MCF 10A (cell line): ENCODE measurements at regions of chr11 and their contacts with region 1.

Region 1: GRCh38 chr11:89405629-89406028 is 85.5 kb downstream of the NOX4 start:
- DNase-seq: peak; percentile 23
- H3K4me3 Mint-ChIP-seq: no peak overlapping the region
- H3K27ac Mint-ChIP-seq: no peak overlapping the region
- H3K4me1 Mint-ChIP-seq: no peaks in the 10 kb centered on the region
- H3K27me3 Mint-ChIP-seq: peaks cover under 1% of the 10 kb centered on the region
- CTCF ChIP-seq: peak; percentile 21

Region 2: GRCh38 chr11:89235976-89236375 is 169.7 kb before region 1 on chr11:
- CTCF ChIA-PET with region 1: no interaction called
- POLR2A ChIA-PET with region 1: no interaction called
- intact Hi-C with region 1: no loop called
- DNase-seq: no peak
- H3K4me3 Mint-ChIP-seq: no peak overlapping the region
- H3K27ac Mint-ChIP-seq: no peak overlapping the region
- H3K4me1 Mint-ChIP-seq: peaks cover 5% of the 10 kb centered on the region
- H3K27me3 Mint-ChIP-seq: peaks cover 90% of the 10 kb centered on the region
- CTCF ChIP-seq: no peak

Region 3: DNA sequence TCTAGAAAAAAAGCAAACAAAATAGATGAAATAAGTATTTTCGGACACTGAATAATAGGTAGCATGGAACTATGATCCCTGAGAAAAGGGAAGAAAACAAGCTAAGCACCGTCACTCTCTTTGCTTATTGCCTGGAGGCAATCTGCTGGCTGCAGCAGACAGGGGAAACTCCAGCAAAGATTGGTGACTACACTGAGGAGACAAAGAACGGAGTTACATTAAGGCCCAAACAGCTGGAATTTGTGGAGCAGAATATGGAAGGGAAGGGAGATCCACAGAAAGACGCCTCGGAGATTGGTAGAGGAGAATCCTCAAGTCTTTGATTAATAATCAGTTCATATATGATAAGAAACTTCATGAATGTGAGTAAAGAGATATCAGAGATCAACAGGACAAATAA is 77.7 kb before region 1 on chr11:
- CTCF ChIA-PET with region 1: interaction called, 21 read pairs
- POLR2A ChIA-PET with region 1: interaction called, 3 read pairs
- intact Hi-C with region 1: loop called (anchors 1 kb)
- DNase-seq: no peak
- H3K4me3 Mint-ChIP-seq: no peak overlapping the region
- H3K27ac Mint-ChIP-seq: peak overlapping the region; percentile 33
- H3K4me1 Mint-ChIP-seq: peaks cover 6% of the 10 kb centered on the region
- H3K27me3 Mint-ChIP-seq: no peaks in the 10 kb centered on the region
- CTCF ChIP-seq: no peak